B cell (primary cell): ENCODE measurements at regions of chr6 and their contacts with region 1.

Region 1: GRCh38 chr6:33317669-33318425 is at the start of gene ZBTB22:
- DNase-seq: peak; percentile 98
- ATAC-seq: peak; percentile 61
- H3K4me3 ChIP-seq: peak within 1 kb of the TSS; percentile 82 to 99 (median 91)
- H3K4me3 Mint-ChIP-seq: peak within 1 kb of the TSS; percentile 100
- H3K27ac ChIP-seq: peak within 1 kb of the TSS; percentile 80 to 100
- H3K27ac Mint-ChIP-seq: peak within 1 kb of the TSS; percentile 99
- H3K4me1 ChIP-seq: peaks cover 66 to 76% of the 10 kb centered on the region in 2 donors
- H3K4me1 Mint-ChIP-seq: peaks cover 82% of the 10 kb centered on the region
- H3K27me3 ChIP-seq: no peaks in the 10 kb centered on the region
- H3K27me3 Mint-ChIP-seq: no peaks in the 10 kb centered on the region
- CTCF ChIP-seq: no peak
- total RNA-seq, gene ZBTB22: 39.7 and 44.4 TPM in 2 replicates

Region 2: DNA sequence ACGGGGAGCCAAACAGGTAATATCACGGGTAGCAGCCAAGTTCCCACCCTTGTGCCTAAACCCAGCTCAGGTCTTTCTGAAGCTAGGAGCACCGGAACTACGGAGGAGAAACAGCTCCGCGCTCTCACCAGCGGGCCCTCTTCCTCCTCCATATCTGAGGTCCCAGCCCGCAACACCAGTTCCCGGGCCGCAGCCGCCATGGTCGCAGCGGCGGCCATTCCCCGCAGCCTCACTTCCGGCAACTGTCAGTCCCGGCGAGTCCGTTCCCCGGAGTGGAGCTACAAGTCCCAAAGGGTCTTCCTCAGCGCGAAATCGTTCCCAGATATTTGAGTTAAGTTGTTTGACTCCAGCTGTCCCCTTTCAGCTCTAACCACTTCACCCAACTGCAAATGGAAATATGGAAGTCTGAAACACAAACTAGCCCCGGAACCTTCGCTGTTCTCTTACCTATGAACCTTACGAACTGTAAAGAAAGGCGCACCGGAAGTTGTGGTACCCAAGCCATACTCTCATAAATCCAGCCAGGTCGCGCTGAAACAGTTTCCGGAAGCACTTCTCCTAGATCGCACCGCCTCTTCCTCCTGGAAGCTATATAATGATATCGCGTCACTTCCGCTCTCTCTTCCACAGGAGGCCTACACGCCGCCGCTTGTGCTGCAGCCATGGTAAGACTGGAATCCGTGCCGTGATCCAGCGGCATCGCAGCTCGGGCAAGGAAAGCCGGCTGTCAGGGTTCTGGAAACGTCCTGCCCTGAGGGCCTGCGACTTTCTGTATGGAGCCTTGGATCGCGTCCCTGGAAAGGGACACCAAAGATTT is 46.2 kb before region 1 on chr6 and contains the starts of genes RPS18 and VPS52:
- CTCF ChIA-PET with region 1: interaction called, 15 read pairs
- POLR2A ChIA-PET with region 1: interaction called, 24 read pairs
- intact Hi-C with region 1: loop called (anchors 1 kb)
- DNase-seq: peak; percentile 99
- ATAC-seq: peak; percentile 86
- H3K4me3 ChIP-seq: peak within 1 kb of the TSS; percentile 81 to 95 (median 86)
- H3K4me3 Mint-ChIP-seq: peak within 1 kb of the TSS; percentile 94
- H3K27ac ChIP-seq: peak within 1 kb of the TSS; percentile 89 to 94
- H3K27ac Mint-ChIP-seq: peak within 1 kb of the TSS; percentile 99
- H3K4me1 ChIP-seq: peaks cover 47 to 54% of the 10 kb centered on the region in 2 donors
- H3K4me1 Mint-ChIP-seq: peaks cover 62% of the 10 kb centered on the region
- H3K27me3 ChIP-seq: no peaks in the 10 kb centered on the region
- H3K27me3 Mint-ChIP-seq: no peaks in the 10 kb centered on the region
- CTCF ChIP-seq: no peak
- total RNA-seq, gene RPS18: 3,593 and 3,830 TPM in 2 replicates
- total RNA-seq, gene VPS52: 100 and 108 TPM in 2 replicates

Region 3: DNA sequence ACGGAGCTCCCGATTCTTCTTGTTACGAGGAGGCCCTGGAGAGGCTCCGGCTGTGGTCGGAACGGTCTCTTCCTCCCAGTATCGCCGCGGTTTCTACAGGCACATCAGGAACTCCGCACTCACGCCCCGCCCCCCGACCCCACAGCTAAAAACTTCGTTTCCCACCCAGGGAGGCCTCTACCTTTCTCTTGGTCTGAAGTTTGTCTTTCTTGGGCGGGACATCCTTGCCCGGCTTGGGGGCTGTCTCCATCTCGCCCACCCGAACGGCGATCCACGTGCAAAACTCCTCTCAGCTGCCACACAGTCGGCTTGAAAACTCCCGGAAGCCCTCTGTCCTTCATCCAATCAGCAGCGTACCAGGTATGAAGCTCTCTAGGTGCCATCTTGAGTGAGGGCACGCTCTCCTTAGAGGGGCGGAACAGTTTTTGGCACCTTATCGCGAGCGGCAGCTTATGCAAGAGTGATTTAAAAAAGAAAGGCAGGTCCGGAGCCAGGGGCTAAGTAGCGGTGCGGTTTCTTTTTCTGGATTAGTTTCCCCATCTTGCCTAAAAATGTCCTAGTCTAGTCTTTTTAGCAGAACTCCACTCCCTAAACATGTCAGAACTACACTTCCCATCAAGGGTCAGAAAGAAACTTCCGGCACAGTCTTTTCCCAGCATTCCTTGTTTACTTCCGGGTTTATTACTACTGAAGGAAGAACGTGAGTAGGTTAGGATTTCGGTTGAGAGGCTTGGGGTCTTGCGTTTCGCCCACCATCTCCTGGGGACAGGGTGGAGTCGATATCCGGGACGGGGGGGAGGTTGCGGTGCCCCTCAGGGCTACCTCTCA is 28.7 kb before region 1 on chr6 and contains the starts of genes PFDN6 and WDR46:
- CTCF ChIA-PET with region 1: no interaction called
- POLR2A ChIA-PET with region 1: interaction called, 11 read pairs
- intact Hi-C with region 1: loop called (anchors 1 kb)
- DNase-seq: peak; percentile 93
- ATAC-seq: peak; percentile 96
- H3K4me3 ChIP-seq: peak within 1 kb of the TSS; percentile 78 to 99 (median 86)
- H3K4me3 Mint-ChIP-seq: peak within 1 kb of the TSS; percentile 93
- H3K27ac ChIP-seq: peak within 1 kb of the TSS; percentile 42 to 68
- H3K27ac Mint-ChIP-seq: peak within 1 kb of the TSS; percentile 86
- H3K4me1 ChIP-seq: peaks cover 19 to 25% of the 10 kb centered on the region in 2 donors
- H3K4me1 Mint-ChIP-seq: peaks cover 38% of the 10 kb centered on the region
- H3K27me3 ChIP-seq: no peaks in the 10 kb centered on the region
- H3K27me3 Mint-ChIP-seq: no peaks in the 10 kb centered on the region
- CTCF ChIP-seq: no peak
- total RNA-seq, gene PFDN6: 44.7 and 51.1 TPM in 2 replicates
- total RNA-seq, gene WDR46: 66.4 and 77.2 TPM in 2 replicates

Region 4: DNA sequence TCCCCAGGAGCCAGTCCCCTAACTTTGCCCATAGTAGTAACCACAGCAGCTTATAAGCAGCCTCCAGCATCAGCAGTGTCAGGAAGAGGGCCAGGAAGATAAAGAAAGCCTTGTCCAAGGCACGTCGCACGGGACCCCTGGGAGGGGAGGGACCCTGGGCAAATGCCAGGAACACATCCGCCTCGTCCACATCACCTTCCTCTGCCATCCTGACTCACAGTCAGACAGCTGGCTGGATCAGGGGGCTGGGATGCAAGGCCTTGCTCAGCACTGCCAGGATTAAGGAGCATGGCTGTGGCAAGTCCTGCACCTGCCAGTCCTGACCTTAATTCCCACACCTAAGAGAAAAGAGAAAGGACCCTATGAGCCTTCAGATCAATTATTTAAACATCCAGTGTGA is 11.2 kb after region 1 on chr6:
- CTCF ChIA-PET with region 1: interaction called, 5 read pairs
- POLR2A ChIA-PET with region 1: interaction called, 10 read pairs
- intact Hi-C with region 1: loop called (anchors 1 kb)
- DNase-seq: no peak
- ATAC-seq: no peak
- H3K4me3 ChIP-seq: no peak overlapping the region
- H3K4me3 Mint-ChIP-seq: no peak overlapping the region
- H3K27ac ChIP-seq: peak overlapping the region in 1 of 2 donors; percentile 26
- H3K27ac Mint-ChIP-seq: peak overlapping the region; percentile 79
- H3K4me1 ChIP-seq: peaks cover 34 to 47% of the 10 kb centered on the region in 2 donors
- H3K4me1 Mint-ChIP-seq: peaks cover 43% of the 10 kb centered on the region
- H3K27me3 ChIP-seq: no peaks in the 10 kb centered on the region
- H3K27me3 Mint-ChIP-seq: no peaks in the 10 kb centered on the region
- CTCF ChIP-seq: no peak

Region 5: GRCh38 chr6:33359331-33359730 is 41.5 kb after region 1 on chr6:
- CTCF ChIA-PET with region 1: no interaction called
- POLR2A ChIA-PET with region 1: no interaction called
- intact Hi-C with region 1: no loop called
- DNase-seq: no peak
- ATAC-seq: no peak
- H3K4me3 ChIP-seq: no peak overlapping the region
- H3K4me3 Mint-ChIP-seq: no peak overlapping the region
- H3K27ac ChIP-seq: no peak overlapping the region
- H3K27ac Mint-ChIP-seq: no peak overlapping the region
- H3K4me1 ChIP-seq: no peaks in the 10 kb centered on the region
- H3K4me1 Mint-ChIP-seq: no peaks in the 10 kb centered on the region
- H3K27me3 ChIP-seq: peaks cover 0 to 2% (median 0%) of the 10 kb centered on the region in 4 experiments
- H3K27me3 Mint-ChIP-seq: peaks cover 8% of the 10 kb centered on the region
- CTCF ChIP-seq: no peak

Region 6: GRCh38 chr6:33373960-33374910 is 56.4 kb after region 1 on chr6:
- CTCF ChIA-PET with region 1: no interaction called
- POLR2A ChIA-PET with region 1: interaction called, 13 read pairs
- intact Hi-C with region 1: no loop called
- DNase-seq: no peak
- ATAC-seq: no peak
- H3K4me3 ChIP-seq: no peak overlapping the region
- H3K4me3 Mint-ChIP-seq: no peak overlapping the region
- H3K27ac ChIP-seq: no peak overlapping the region
- H3K27ac Mint-ChIP-seq: no peak overlapping the region
- H3K4me1 ChIP-seq: no peaks in the 10 kb centered on the region
- H3K4me1 Mint-ChIP-seq: no peaks in the 10 kb centered on the region
- H3K27me3 ChIP-seq: no peaks in the 10 kb centered on the region
- H3K27me3 Mint-ChIP-seq: no peaks in the 10 kb centered on the region
- CTCF ChIP-seq: no peak

Region 7: DNA sequence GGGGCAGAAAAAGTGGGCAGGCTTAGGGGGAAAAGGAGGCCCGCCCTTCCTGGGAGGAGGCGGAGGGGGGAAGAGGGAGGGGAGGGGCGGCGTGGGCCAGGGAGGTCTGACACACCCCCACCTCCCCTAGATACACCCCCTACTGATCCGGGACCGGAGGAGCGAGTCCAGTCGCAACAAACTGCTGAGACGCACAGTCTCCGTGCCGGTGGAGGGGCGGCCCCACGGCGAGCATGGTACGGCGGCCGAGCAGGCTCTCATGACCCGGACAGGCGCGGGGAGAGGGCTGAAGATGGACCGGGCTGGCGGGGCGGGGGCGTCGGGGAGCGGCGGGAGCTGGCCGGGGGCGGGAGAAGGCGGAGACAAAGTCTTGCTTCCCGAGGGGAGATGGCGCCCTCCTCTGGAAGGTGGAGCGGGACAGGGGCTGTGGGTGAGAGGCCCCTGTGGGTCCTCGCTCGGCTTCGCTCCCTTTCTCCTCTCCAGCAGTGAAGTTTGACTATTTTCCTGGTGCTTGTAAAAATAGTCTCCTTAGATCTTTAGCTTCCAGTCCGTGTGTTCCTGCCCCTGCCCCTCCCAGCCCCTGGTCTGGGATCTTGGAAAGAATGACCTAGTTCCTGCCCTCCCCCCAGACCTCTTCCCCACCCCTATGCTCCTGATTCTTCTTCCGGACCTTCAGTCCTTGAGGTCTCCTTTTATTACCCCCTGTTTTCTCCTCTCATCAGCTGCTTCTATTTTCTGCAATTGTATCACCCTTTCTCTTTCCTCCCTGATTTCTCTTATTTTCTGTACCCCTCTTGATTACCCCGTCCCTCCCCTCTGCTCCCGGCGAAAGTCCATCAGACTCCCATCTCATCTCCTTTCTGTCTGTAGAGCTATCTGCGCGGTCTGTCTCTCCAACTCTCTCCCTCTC is 108.1 kb after region 1 on chr6:
- CTCF ChIA-PET with region 1: interaction called, 7 read pairs
- POLR2A ChIA-PET with region 1: interaction called, 10 read pairs
- intact Hi-C with region 1: loop called (anchors 5 kb)
- DNase-seq: peak; percentile 83
- ATAC-seq: peak; percentile 59
- H3K4me3 ChIP-seq: peak overlapping the region; percentile 48 to 79 (median 62)
- H3K4me3 Mint-ChIP-seq: peak overlapping the region; percentile 92
- H3K27ac ChIP-seq: peak overlapping the region; percentile 78 to 86
- H3K27ac Mint-ChIP-seq: peak overlapping the region; percentile 91
- H3K4me1 ChIP-seq: peaks cover 50 to 56% of the 10 kb centered on the region in 2 donors
- H3K4me1 Mint-ChIP-seq: peaks cover 65% of the 10 kb centered on the region
- H3K27me3 ChIP-seq: no peaks in the 10 kb centered on the region
- H3K27me3 Mint-ChIP-seq: peaks cover 4% of the 10 kb centered on the region
- CTCF ChIP-seq: peak; percentile 25

Region 8: DNA sequence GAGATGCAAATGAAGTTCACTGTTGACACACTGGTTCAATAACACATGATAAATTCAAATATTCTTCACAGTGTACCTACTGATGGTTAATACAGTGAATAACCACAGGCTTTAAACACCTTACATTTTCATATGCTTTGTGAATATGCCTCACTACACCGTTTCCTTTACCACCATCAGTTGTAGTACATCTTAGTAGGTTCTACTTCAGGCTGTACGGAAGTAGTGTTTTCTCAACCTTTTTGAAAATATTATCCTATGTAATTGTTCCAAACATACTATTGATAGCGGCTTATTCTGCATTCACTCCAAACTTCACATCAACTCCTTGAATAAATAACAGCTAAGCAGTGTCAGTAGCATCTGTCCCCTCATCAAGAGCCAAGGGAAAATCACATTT is 151.8 kb after region 1 on chr6:
- CTCF ChIA-PET with region 1: no interaction called
- POLR2A ChIA-PET with region 1: no interaction called
- intact Hi-C with region 1: no loop called
- DNase-seq: no peak
- ATAC-seq: no peak
- H3K4me3 ChIP-seq: no peak overlapping the region
- H3K4me3 Mint-ChIP-seq: no peak overlapping the region
- H3K27ac ChIP-seq: no peak overlapping the region
- H3K27ac Mint-ChIP-seq: no peak overlapping the region
- H3K4me1 ChIP-seq: no peaks in the 10 kb centered on the region
- H3K4me1 Mint-ChIP-seq: no peaks in the 10 kb centered on the region
- H3K27me3 ChIP-seq: no peaks in the 10 kb centered on the region
- H3K27me3 Mint-ChIP-seq: peaks cover 4% of the 10 kb centered on the region
- CTCF ChIP-seq: no peak

Region 9: DNA sequence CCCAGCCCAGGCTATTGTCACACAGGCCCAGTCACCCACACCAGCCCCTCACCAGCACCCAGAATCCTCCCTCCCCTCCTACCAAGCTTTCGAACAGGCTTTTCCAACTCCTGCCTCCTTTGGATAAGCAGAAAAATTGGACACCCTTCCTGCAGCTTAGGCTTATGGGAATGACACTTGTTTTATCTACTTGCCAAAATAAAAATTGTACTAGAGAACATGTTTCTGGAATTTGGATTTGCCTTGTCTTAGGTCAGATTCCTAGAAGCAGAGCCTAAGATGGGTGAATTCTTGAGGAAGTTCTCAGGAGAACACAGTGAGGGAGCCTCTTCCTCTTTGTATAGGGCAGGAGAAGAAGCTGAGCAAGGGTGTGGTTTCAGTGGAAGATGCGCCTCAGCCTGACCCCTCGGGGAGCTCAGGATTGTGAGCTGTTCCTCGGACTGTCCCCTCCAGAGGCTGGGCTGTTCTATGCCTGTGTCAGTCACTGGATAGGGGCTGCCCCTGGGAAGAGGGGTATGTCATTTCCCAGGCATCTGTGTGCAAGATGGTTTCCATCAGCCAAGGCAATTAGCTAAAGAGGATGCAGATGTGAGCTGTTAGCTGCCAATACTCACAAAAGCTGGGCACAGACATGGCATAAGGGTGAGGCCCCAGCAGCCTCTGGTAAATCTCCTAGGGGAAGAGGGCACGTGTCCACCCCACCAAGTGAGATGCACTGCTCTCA is 337.1 kb after region 1 on chr6:
- CTCF ChIA-PET with region 1: no interaction called
- POLR2A ChIA-PET with region 1: no interaction called
- intact Hi-C with region 1: no loop called
- DNase-seq: no peak
- ATAC-seq: no peak
- H3K4me3 ChIP-seq: no peak overlapping the region
- H3K4me3 Mint-ChIP-seq: no peak overlapping the region
- H3K27ac ChIP-seq: no peak overlapping the region
- H3K27ac Mint-ChIP-seq: no peak overlapping the region
- H3K4me1 ChIP-seq: no peaks in the 10 kb centered on the region
- H3K4me1 Mint-ChIP-seq: peaks cover 5% of the 10 kb centered on the region
- H3K27me3 ChIP-seq: no peaks in the 10 kb centered on the region
- H3K27me3 Mint-ChIP-seq: no peaks in the 10 kb centered on the region
- CTCF ChIP-seq: no peak